ENCODE measurements at regions of chr6 and their contacts with region 1.

Region 1: GRCh38 chr6:100099189-100100074 is 105.4 kb upstream of the MCHR2 start:
- DNase-seq: no peak
- ATAC-seq: peak in 3 of 4 donors; percentile 62 to 70 (median 68)
- H3K4me3 ChIP-seq: no peak overlapping the region
- H3K27ac ChIP-seq: no peak overlapping the region
- H3K4me1 ChIP-seq: no peaks in the 10 kb centered on the region
- H3K27me3 ChIP-seq: no peaks in the 10 kb centered on the region
- CTCF ChIP-seq: peak in 2 of 4 donors; percentile 20 to 31

Region 2: DNA sequence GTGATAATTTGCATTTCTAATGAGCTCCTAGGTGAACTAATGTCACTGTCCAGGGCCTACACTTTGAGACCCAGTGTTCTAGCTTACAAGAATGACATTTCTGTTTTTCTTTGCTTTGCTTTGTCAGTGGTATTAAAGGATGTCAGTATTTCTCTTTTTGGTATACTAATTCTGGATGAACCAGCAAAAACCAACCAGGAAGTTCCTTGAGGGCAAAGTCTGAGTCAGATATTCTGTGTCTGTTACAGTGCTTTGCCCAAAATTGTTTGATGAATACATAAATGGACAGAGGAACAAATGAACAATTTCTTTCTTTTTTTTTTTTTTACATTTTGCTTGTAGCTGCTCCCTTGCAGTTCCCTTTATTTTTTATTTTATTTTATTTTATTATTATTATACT is 720.8 kb before region 1 on chr6:
- intact Hi-C with region 1: no loop called
- DNase-seq: no peak
- ATAC-seq: no peak
- H3K4me3 ChIP-seq: no peak overlapping the region
- H3K27ac ChIP-seq: no peak overlapping the region
- H3K4me1 ChIP-seq: no peaks in the 10 kb centered on the region
- H3K27me3 ChIP-seq: no peaks in the 10 kb centered on the region
- CTCF ChIP-seq: no peak

Region 3: GRCh38 chr6:99879431-99879830 is 220.0 kb before region 1 on chr6:
- intact Hi-C with region 1: loop called in 2 of 3 experiments (anchors 5 to 10 kb)
- DNase-seq: no peak
- ATAC-seq: no peak
- H3K4me3 ChIP-seq: no peak overlapping the region
- H3K27ac ChIP-seq: no peak overlapping the region
- H3K4me1 ChIP-seq: no peaks in the 10 kb centered on the region
- H3K27me3 ChIP-seq: no peaks in the 10 kb centered on the region
- CTCF ChIP-seq: no peak